Activated CD4-positive, alpha-beta memory T cell treated with anti-CD3 and anti-CD28 coated beads for 36 hours (primary cell): ENCODE measurements at regions of chr14 and their contacts with region 1.

Region 1: DNA sequence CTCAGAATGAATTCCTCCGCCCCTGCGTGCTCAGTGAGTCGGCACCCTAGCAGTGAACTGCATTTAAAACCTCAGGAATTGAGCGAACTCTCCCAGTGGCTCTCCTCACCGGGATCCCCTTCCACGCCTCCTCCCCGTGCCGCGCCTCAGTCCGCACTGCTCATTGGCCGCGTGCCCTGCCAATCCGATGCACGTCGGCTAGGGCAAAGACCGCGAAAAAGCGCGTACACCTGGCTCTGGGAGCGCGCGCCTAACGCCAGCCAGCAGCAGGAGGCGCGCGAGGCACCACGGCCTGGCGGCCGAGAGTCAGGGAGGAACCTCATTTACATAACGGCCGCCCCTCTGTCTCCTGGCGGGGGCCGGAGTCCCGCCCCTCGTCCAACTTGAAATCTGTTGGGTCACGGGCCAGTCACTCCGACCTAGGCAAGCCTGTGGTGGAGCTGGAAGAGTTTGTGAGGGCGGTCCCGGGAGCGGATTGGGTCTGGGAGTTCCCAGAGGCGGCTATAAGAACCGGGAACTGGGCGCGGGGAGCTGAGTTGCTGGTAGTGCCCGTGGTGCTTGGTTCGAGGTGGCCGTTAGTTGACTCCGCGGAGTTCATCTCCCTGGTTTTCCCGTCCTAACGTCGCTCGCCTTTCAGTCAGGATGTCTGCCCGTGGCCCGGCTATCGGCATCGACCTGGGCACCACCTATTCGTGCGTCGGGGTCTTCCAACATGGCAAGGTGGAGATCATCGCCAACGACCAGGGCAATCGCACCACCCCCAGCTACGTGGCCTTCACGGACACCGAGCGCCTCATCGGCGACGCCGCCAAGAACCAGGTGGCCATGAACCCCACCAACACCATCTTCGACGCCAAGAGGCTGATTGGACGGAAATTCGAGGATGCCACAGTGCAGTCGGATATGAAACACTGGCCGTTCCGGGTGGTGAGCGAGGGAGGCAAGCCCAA is at the start of gene HSPA2:
- DNase-seq: peak; percentile 98
- H3K4me3 Mint-ChIP-seq: peak within 1 kb of the TSS; percentile 89
- H3K27ac Mint-ChIP-seq: peak within 1 kb of the TSS; percentile 84
- H3K4me1 Mint-ChIP-seq: peaks cover 35% of the 10 kb centered on the region
- H3K27me3 Mint-ChIP-seq: peaks cover 24% of the 10 kb centered on the region
- total RNA-seq, gene HSPA2: 6.6 to 6.7 TPM

Region 2: DNA sequence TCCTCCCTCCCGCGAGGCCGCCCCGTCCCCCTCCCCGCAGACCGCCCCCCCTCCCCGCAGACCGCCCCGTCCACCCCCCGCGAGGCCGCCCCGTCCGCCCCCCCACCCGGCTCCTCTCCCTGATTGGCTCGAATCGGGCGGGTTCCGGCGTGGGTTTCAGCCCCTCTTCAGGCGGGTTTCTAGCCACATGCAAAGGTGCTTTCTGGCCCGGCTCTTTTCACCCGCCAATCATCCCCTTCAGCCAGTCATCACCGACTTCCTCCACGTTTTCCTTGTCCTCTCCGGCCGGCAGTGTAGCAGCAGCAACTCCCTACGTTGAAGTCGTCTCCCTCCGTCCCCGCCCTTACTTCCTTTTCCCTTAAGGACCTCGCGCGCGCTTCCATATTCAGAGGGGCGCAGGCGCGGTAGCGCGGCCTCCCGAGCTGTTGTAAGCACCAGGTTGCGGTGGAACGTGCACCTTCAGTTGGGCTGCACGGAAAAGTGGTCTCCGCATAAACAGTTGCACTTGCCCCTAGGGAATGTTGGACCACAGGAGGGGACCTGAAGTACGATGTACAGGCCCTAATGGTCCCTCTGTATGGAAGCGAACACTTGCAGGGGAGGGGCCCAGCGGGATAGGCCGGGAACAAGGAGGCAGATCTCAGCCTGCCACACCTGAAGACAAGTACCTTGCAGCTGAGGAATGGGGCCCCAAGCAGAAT is 201.7 kb before region 1 on chr14:
- CTCF ChIA-PET with region 1: interaction called, 6 read pairs
- POLR2A ChIA-PET with region 1: no interaction called
- intact Hi-C with region 1: loop called (anchors 2 kb)
- DNase-seq: peak; percentile 93
- H3K4me3 Mint-ChIP-seq: peak overlapping the region; percentile 91
- H3K27ac Mint-ChIP-seq: peak overlapping the region; percentile 95
- H3K4me1 Mint-ChIP-seq: peaks cover 23% of the 10 kb centered on the region
- H3K27me3 Mint-ChIP-seq: no peaks in the 10 kb centered on the region

Region 3: GRCh38 chr14:64387694-64388532 is 152.6 kb before region 1 on chr14 and contains the start of gene MTHFD1:
- CTCF ChIA-PET with region 1: interaction called, 3 read pairs
- POLR2A ChIA-PET with region 1: interaction called, 4 read pairs
- intact Hi-C with region 1: loop called (anchors 1 kb)
- DNase-seq: peak; percentile 98
- H3K4me3 Mint-ChIP-seq: peak within 1 kb of the TSS; percentile 99
- H3K27ac Mint-ChIP-seq: peak within 1 kb of the TSS; percentile 95
- H3K4me1 Mint-ChIP-seq: peaks cover 33% of the 10 kb centered on the region
- H3K27me3 Mint-ChIP-seq: peaks cover 3% of the 10 kb centered on the region
- total RNA-seq, gene MTHFD1: 212 to 221 TPM

Region 4: GRCh38 chr14:64444984-64445845 is 95.3 kb before region 1 on chr14:
- CTCF ChIA-PET with region 1: no interaction called
- POLR2A ChIA-PET with region 1: no interaction called
- intact Hi-C with region 1: loop called (anchors 1 kb)
- DNase-seq: peak; percentile 71
- H3K4me3 Mint-ChIP-seq: no peak overlapping the region
- H3K27ac Mint-ChIP-seq: peak overlapping the region; percentile 92
- H3K4me1 Mint-ChIP-seq: peaks cover 35% of the 10 kb centered on the region
- H3K27me3 Mint-ChIP-seq: no peaks in the 10 kb centered on the region

Region 5: GRCh38 chr14:64491637-64492036 is 48.8 kb before region 1 on chr14:
- CTCF ChIA-PET with region 1: no interaction called
- POLR2A ChIA-PET with region 1: no interaction called
- intact Hi-C with region 1: no loop called
- DNase-seq: no peak
- H3K4me3 Mint-ChIP-seq: no peak overlapping the region
- H3K27ac Mint-ChIP-seq: no peak overlapping the region
- H3K4me1 Mint-ChIP-seq: peaks cover 46% of the 10 kb centered on the region
- H3K27me3 Mint-ChIP-seq: no peaks in the 10 kb centered on the region

Region 6: GRCh38 chr14:64758691-64759584 is 218.5 kb after region 1 on chr14:
- CTCF ChIA-PET with region 1: interaction called, 3 read pairs
- POLR2A ChIA-PET with region 1: no interaction called
- intact Hi-C with region 1: loop called (anchors 5 kb)
- DNase-seq: no peak
- H3K4me3 Mint-ChIP-seq: no peak overlapping the region
- H3K27ac Mint-ChIP-seq: no peak overlapping the region
- H3K4me1 Mint-ChIP-seq: peaks cover 86% of the 10 kb centered on the region
- H3K27me3 Mint-ChIP-seq: no peaks in the 10 kb centered on the region

Region 7: DNA sequence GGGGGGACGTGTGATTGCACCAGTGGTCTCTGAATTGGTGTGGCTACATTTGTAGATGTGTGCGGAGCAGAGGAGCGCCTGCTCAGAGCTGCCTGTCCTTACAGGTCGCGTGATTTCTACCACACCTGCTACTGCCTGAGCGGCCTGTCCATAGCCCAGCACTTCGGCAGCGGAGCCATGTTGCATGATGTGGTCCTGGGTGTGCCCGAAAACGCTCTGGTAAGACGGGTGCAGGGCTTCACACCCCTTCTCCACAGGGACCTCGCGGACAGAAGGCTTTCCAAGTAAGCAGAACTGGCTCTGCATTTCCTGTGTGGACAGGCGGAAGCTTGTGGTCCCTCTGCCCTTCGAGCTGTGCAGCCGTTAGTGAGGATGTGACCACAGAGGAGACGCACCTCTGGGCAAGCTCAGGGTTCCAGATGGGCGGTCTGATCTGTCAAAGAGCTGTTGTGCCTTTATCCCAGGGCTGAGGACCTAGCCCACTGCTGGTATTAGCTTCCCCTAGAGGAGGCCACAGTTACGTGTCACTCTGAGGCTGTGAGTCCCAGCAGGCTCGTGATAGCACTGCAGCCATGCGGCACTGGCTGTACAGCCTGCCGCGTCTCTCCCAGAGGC is 514.1 kb after region 1 on chr14:
- CTCF ChIA-PET with region 1: no interaction called
- POLR2A ChIA-PET with region 1: no interaction called
- intact Hi-C with region 1: no loop called
- DNase-seq: no peak
- H3K4me3 Mint-ChIP-seq: no peak overlapping the region
- H3K27ac Mint-ChIP-seq: no peak overlapping the region
- H3K4me1 Mint-ChIP-seq: no peaks in the 10 kb centered on the region
- H3K27me3 Mint-ChIP-seq: no peaks in the 10 kb centered on the region

Region 8: GRCh38 chr14:65302571-65303189 is 762.2 kb after region 1 on chr14:
- CTCF ChIA-PET with region 1: no interaction called
- POLR2A ChIA-PET with region 1: no interaction called
- intact Hi-C with region 1: no loop called
- DNase-seq: peak; percentile 87
- H3K4me3 Mint-ChIP-seq: peak overlapping the region; percentile 40
- H3K27ac Mint-ChIP-seq: peak overlapping the region; percentile 87
- H3K4me1 Mint-ChIP-seq: peaks cover 45% of the 10 kb centered on the region
- H3K27me3 Mint-ChIP-seq: no peaks in the 10 kb centered on the region